ENCODE measurements at regions of chr5 and their contacts with region 1.

Region 1: DNA sequence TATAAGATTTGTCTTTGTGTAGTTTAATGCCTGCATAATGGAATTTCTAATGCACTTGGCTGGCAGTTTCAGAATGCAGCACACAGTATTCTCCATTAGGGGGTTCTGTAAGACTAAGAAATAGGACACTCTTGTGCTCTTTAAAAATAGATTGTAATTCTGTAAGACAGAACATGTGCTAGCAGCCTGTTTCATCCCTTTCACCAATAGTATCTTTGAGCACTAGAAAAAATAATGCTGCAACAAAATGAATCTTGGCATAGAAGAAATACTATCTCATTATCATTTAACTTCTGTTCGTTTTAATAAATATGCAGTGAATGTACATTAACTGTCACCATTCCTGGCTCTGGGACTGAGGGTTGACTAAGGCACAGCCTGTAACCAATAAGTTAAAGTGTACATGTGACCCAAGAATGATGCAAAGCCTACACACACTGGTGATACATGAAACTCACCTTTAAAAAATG is 23.8 kb upstream of the ZNF622 start:
- DNase-seq: no peak
- ATAC-seq: peak; percentile 82
- H3K4me3 ChIP-seq: no peak overlapping the region
- H3K27ac ChIP-seq: no peak overlapping the region
- H3K4me1 ChIP-seq: no peaks in the 10 kb centered on the region
- H3K27me3 ChIP-seq: no peaks in the 10 kb centered on the region; a peak in 1 of 4 replicates
- CTCF ChIP-seq: peak; percentile 33 to 49 (median 35); a peak in 5 of 6 replicates
- EP300 ChIP-seq: no peak
- POLR2A ChIP-seq: no peak
- RAD21 ChIP-seq: peak; percentile 73

Region 2: GRCh38 chr5:17204133-17204489 is 714.8 kb after region 1 on chr5:
- CTCF ChIA-PET with region 1: no interaction called
- POLR2A ChIA-PET with region 1: no interaction called
- RAD21 ChIA-PET with region 1: no interaction called
- SMC1A ChIA-PET with region 1: no interaction called
- in situ Hi-C with region 1: no loop called
- intact Hi-C with region 1: loop called (anchors 5 kb)
- DNase-seq: no peak
- ATAC-seq: no peak
- H3K4me3 ChIP-seq: no peak overlapping the region
- H3K27ac ChIP-seq: no peak overlapping the region
- H3K4me1 ChIP-seq: no peaks in the 10 kb centered on the region
- H3K27me3 ChIP-seq: no peaks in the 10 kb centered on the region
- CTCF ChIP-seq: no peak
- EP300 ChIP-seq: no peak
- POLR2A ChIP-seq: no peak
- RAD21 ChIP-seq: no peak